Activated CD8-positive, alpha-beta memory T cell treated with anti-CD3 and anti-CD28 coated beads, Interleukin-2, amount 10 ng/mL, durations not matched to agents 7 days and 5 days (primary cell): ENCODE measurements at regions of chr10 and their contacts with region 1.

Region 1: DNA sequence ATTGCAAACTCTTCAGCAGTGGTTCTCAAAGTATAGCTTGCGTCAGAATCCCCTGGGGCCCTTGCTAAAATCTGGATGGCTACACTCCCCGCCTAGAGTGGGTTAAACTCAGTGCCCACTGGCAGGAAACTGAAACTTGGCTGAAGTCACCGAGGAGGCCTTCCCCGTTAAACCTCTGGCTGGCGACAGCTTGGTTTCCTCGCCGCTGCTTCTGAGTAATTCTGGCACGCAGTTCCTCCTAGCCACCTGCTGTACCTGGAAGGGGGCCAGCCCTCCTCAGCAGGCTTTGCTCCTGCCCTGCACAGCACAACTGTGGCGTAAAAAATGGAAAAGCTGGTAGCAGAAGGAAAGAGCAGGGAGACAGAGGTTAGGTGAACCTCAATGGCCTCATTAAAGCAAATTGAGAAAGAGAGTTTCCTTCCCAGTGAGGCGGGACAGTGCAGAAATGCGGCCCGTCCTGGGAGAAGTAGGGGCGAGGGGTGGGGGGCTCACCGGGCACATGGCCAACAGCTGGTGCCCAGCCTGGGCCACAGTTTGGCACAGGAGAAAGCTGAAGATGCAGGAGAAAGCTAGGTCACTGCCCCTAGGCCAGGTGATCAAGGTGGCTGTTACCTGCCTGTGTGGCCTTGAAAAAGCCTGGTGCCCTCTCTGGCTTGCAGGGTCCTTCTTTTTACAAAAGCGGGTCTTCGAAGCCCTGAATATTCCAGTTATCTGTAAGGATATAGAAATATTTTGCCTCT is 46.6 kb downstream of the ALOX5 start:
- DNase-seq: peak; percentile 89
- ATAC-seq: peak; percentile 40
- H3K4me3 Mint-ChIP-seq: peak overlapping the region; percentile 91
- H3K27ac Mint-ChIP-seq: peak overlapping the region; percentile 97
- H3K4me1 Mint-ChIP-seq: peaks cover 80% of the 10 kb centered on the region
- H3K27me3 Mint-ChIP-seq: no peaks in the 10 kb centered on the region

Region 2: DNA sequence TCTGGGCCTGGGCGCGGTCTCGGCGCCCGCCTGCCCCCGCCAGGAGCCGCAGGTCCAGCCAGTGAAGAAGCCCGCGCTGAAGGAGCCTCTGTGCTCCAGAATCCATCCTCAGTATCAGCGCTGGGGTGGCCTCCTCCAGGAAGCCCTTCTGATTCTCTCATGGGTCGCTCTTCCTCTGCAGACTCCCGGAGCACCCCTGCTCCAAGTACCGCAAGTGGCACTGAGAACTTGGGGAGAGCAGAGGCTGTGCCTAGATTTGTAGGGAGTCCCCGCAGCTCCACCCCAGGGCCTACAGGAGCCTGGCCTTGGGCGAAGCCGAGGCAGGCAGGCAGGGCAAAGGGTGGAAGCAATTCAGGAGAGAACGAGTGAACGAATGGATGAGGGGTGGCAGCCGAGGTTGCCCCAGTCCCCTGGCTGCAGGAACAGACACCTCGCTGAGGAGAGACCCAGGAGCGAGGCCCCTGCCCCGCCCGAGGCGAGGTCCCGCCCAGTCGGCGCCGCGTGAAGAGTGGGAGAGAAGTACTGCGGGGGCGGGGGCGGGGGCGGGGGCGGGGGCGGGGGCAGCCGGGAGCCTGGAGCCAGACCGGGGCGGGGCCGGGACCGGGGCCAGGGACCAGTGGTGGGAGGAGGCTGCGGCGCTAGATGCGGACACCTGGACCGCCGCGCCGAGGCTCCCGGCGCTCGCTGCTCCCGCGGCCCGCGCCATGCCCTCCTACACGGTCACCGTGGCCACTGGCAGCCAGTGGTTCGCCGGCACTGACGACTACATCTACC is 46.9 kb before region 1 on chr10 and contains the start of gene ALOX5:
- CTCF ChIA-PET with region 1: no interaction called
- DNase-seq: peak; percentile 61
- ATAC-seq: peak; percentile 81
- H3K4me3 Mint-ChIP-seq: peak within 1 kb of the TSS; percentile 79
- H3K27ac Mint-ChIP-seq: peak within 1 kb of the TSS; percentile 58
- H3K4me1 Mint-ChIP-seq: peaks cover 19% of the 10 kb centered on the region
- H3K27me3 Mint-ChIP-seq: peaks cover 71% of the 10 kb centered on the region
- total RNA-seq, gene ALOX5: 1.9 to 8.9 TPM

Region 3: GRCh38 chr10:45433716-45434469 is 13.3 kb after region 1 on chr10:
- CTCF ChIA-PET with region 1: interaction called, 16 read pairs
- DNase-seq: no peak
- ATAC-seq: peak; percentile 47
- H3K4me3 Mint-ChIP-seq: no peak overlapping the region
- H3K27ac Mint-ChIP-seq: peak overlapping the region; percentile 71
- H3K4me1 Mint-ChIP-seq: peaks cover 33% of the 10 kb centered on the region
- H3K27me3 Mint-ChIP-seq: no peaks in the 10 kb centered on the region